ENCODE measurements at regions of chr9 and their contacts with region 1.

Region 1: GRCh38 chr9:74773886-74774479 is 113.7 kb downstream of the TRPM6 start:
- DNase-seq: peak; percentile 71 to 90 (median 82)
- ATAC-seq: peak; percentile 66 to 74
- H3K4me3 ChIP-seq: no peak overlapping the region
- H3K27ac ChIP-seq: no peak overlapping the region
- H3K4me1 ChIP-seq: peaks cover 1% of the 10 kb centered on the region
- H3K27me3 ChIP-seq: no peaks in the 10 kb centered on the region

Region 2: DNA sequence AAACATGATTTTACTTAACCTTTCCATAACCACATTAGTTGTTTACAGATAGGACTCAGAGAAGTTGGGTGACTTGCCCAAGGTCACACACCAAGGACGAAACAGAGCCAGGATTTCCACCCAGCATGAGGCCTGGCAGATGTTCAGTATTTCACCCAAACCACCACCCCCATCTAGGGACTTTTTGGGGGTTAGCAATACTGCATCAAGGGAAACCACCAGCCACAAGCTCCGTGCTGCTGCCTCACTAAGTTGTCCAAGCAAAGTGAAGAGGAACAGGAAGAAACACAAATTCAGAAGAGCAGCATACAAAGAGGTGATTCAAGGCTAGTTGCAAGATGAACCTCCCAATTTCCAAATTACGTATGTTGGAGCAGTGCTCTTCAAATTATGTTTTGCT is 496.5 kb before region 1 on chr9:
- intact Hi-C with region 1: no loop called
- DNase-seq: no peak
- ATAC-seq: no peak
- H3K4me3 ChIP-seq: no peak overlapping the region
- H3K27ac ChIP-seq: no peak overlapping the region
- H3K4me1 ChIP-seq: no peaks in the 10 kb centered on the region
- H3K27me3 ChIP-seq: no peaks in the 10 kb centered on the region

Region 3: DNA sequence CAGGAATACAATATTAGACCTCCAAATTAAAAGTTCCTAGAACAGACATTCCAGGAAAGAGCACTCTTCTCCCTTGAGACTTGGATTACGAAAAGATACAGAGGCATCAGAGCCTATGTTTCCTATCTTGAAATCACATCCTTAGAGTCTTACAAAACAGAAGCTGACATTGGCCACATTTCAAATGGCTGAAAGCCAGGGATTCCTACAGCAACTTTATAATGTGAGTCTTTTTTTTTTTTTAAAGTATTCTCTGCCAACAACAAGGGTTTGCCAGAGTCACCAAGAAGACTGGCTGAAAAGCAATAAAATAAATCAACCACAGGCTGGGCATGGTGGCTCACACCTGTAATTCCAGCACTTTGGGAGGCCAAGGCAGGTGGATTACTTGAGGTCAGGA is 50.7 kb after region 1 on chr9:
- intact Hi-C with region 1: loop called in 1 of 4 experiments (anchors 5 kb)
- DNase-seq: peak in 1 of 3 donors; percentile 20
- ATAC-seq: peak; percentile 63 to 68
- H3K4me3 ChIP-seq: no peak overlapping the region
- H3K27ac ChIP-seq: no peak overlapping the region
- H3K4me1 ChIP-seq: no peaks in the 10 kb centered on the region
- H3K27me3 ChIP-seq: no peaks in the 10 kb centered on the region

Region 4: GRCh38 chr9:74846771-74847170 is 72.8 kb after region 1 on chr9:
- intact Hi-C with region 1: no loop called
- DNase-seq: no peak
- ATAC-seq: no peak
- H3K4me3 ChIP-seq: no peak overlapping the region
- H3K27ac ChIP-seq: no peak overlapping the region
- H3K4me1 ChIP-seq: no peaks in the 10 kb centered on the region
- H3K27me3 ChIP-seq: no peaks in the 10 kb centered on the region

Region 5: GRCh38 chr9:75001719-75002422 is 227.9 kb after region 1 on chr9:
- intact Hi-C with region 1: loop called (anchors 2 to 5 kb)
- DNase-seq: no peak
- ATAC-seq: peak; percentile 81 to 83
- H3K4me3 ChIP-seq: no peak overlapping the region
- H3K27ac ChIP-seq: no peak overlapping the region
- H3K4me1 ChIP-seq: no peaks in the 10 kb centered on the region
- H3K27me3 ChIP-seq: no peaks in the 10 kb centered on the region

Region 6: GRCh38 chr9:75071530-75072124 is 297.6 kb after region 1 on chr9:
- intact Hi-C with region 1: loop called (anchors 5 kb)
- DNase-seq: no peak
- ATAC-seq: peak in 1 of 2 donors; percentile 48
- H3K4me3 ChIP-seq: no peak overlapping the region
- H3K27ac ChIP-seq: no peak overlapping the region
- H3K4me1 ChIP-seq: no peaks in the 10 kb centered on the region
- H3K27me3 ChIP-seq: no peaks in the 10 kb centered on the region

Measured in right cardiac atrium (tissue), 5 donors.